Endothelial cell of umbilical vein (primary cell): ENCODE measurements at regions of chr10 and their contacts with region 1.

Region 1: DNA sequence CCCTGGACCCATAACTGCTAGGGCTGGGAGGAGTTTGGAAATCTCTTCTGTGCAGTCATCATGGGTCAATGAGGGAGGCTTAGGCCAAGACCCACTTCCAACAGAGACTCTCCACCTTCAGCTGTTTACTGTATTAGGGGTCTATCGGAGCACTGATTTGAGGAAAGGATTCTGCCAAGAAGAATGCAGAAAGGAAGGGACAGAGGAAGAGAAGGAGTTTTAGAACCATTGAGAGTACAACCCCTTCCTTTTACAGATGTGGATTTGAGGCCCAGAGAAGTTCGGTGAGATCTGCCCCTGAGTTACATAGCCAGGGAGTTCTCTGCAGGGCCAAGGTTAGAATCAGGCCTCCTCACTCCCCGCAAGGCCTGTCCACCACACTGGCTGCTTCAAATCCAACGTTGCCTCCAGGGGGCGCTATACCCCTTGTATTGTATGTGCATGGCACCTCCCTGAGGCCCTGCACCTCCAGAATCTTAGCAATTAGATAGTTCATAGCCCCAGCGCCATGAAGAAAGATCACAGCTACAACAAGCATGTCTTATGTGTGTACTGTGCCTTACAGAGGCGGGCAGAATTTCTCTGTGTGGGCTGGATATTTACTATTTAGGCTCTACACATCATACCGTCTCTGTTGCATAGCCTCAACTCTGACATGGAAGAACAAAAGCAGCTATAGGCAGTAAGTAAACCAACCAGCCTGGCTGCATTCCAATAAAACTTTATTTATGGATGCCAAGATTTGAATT is 246.8 kb downstream of the SKIDA1 start:
- DNase-seq: peak; percentile 90
- H3K4me3 ChIP-seq: no peak overlapping the region
- H3K27ac ChIP-seq: no peak overlapping the region
- H3K4me1 ChIP-seq: peaks cover 2% of the 10 kb centered on the region
- H3K27me3 ChIP-seq: no peaks in the 10 kb centered on the region
- CTCF ChIP-seq: peak; percentile 73 to 77
- POLR2A ChIP-seq: no peak

Region 2: DNA sequence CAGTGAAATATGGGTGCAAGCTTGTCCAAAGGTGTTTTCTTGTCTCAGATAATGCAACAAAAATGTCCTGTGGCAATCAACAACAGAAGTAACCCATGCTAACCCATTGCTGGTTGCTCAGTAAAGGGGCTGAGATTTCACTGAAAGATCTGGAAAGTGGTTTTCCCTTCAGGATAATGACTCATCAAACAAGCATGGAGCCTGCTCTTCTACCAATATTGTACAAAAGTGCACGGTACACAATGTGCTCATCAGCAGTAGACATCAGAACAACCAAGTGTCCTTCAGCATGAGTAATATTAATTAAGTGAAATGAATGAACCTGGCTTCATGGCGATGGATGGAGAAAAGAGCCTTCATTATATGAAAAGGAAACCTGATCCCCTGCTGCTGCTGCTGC is 94.4 kb before region 1 on chr10:
- CTCF ChIA-PET with region 1: no interaction called
- POLR2A ChIA-PET with region 1: no interaction called
- dilution Hi-C with region 1: no loop called
- intact Hi-C with region 1: no loop called
- DNase-seq: peak; percentile 34
- H3K4me3 ChIP-seq: no peak overlapping the region
- H3K27ac ChIP-seq: no peak overlapping the region
- H3K4me1 ChIP-seq: peaks cover 8% of the 10 kb centered on the region
- H3K27me3 ChIP-seq: no peaks in the 10 kb centered on the region
- CTCF ChIP-seq: no peak
- POLR2A ChIP-seq: no peak

Region 3: DNA sequence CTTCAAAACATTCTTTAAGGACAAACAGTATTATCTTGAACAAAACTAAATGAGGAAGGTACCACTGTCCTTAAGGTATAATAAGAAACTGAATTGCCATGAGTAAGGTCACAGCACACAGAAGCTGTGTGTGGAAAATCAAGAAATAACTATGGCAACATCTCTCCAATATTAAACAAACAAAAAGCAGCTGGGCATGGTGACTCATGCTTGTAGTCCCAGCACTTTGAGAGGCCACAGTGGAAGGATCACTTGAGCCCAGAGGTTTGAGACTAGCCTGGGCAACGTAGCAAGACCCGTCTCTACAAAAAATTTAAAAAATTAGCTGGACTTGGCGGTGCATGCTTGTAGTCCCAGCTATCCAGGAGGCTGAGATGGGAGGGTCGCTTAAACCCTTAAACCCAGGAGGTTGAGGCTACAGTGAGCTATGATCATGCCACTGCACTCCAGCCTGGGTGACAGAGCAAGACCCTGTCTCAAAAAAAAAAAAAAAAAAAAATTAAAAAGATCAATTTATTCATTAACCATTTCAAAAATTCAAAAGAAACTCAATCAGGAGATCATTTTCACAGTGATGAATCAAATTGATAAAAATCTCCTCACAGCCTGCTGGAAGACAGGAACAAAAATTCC is 51.4 kb after region 1 on chr10:
- CTCF ChIA-PET with region 1: interaction called, 10 read pairs
- POLR2A ChIA-PET with region 1: interaction called, 6 read pairs
- dilution Hi-C with region 1: no loop called
- intact Hi-C with region 1: loop called (anchors 1 kb)
- DNase-seq: peak; percentile 95
- H3K4me3 ChIP-seq: peak overlapping the region in 1 of 3 experiments; percentile 40
- H3K27ac ChIP-seq: peak overlapping the region; percentile 97
- H3K4me1 ChIP-seq: peaks cover 21% of the 10 kb centered on the region
- H3K27me3 ChIP-seq: no peaks in the 10 kb centered on the region
- CTCF ChIP-seq: no peak
- POLR2A ChIP-seq: no peak

Region 4: GRCh38 chr10:21355561-21356011 is 76.9 kb after region 1 on chr10:
- CTCF ChIA-PET with region 1: interaction called, 12 read pairs
- POLR2A ChIA-PET with region 1: no interaction called
- dilution Hi-C with region 1: no loop called
- intact Hi-C with region 1: no loop called
- DNase-seq: no peak
- H3K4me3 ChIP-seq: no peak overlapping the region
- H3K27ac ChIP-seq: no peak overlapping the region
- H3K4me1 ChIP-seq: no peaks in the 10 kb centered on the region
- H3K27me3 ChIP-seq: no peaks in the 10 kb centered on the region
- CTCF ChIP-seq: no peak
- POLR2A ChIP-seq: no peak

Region 5: GRCh38 chr10:21372651-21373410 is 94.2 kb after region 1 on chr10:
- CTCF ChIA-PET with region 1: interaction called, 18 read pairs
- POLR2A ChIA-PET with region 1: no interaction called
- dilution Hi-C with region 1: no loop called
- intact Hi-C with region 1: loop called (anchors 2 kb)
- DNase-seq: peak; percentile 88
- H3K4me3 ChIP-seq: peak overlapping the region in 1 of 3 experiments; percentile 15
- H3K27ac ChIP-seq: peak overlapping the region; percentile 14
- H3K4me1 ChIP-seq: peaks cover 26% of the 10 kb centered on the region
- H3K27me3 ChIP-seq: no peaks in the 10 kb centered on the region
- CTCF ChIP-seq: no peak
- POLR2A ChIP-seq: no peak

Region 6: DNA sequence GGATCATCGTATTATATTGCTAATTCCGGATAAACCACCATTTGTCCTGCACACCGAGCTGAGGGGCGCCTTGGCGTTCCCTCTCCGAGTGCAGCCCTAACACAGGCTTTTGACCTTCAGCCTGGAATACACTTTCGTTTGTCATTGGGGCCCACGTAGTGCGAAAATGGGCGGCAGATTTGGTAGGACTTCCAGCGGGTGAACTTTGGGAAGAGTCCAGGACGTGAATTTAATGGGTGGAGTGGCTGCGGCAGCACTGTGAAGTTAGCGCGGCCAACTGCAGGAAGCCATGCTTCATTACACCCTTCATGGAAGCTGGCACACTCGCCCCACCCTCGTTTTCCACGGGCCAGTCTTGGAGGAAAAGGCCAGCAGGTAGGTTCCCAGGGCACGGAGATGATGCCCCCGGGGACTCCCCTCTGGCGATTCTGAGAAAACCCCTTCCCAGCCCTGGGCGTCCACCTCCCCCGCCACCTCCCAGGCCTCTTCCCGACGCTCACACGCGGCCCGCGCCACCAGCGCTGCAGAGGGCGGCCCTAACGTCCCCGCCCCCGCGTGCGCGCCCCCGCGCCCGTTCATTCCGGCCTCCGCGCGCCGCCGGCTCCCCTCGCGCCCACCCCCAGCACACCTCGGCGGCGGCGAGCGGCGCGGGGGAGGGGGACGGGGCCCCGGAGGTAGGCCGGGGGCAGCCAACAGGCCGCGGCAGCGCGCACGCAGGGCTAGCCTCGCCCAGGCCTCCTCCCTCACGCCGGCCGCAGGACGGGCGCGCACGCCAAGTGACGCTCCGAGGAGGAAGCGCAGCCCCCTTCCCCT is 255.0 kb after region 1 on chr10 and contains the start of gene MLLT10:
- CTCF ChIA-PET with region 1: interaction called, 6 read pairs
- POLR2A ChIA-PET with region 1: no interaction called
- dilution Hi-C with region 1: no loop called
- intact Hi-C with region 1: loop called (anchors 1 kb)
- DNase-seq: peak; percentile 97
- H3K4me3 ChIP-seq: peak within 1 kb of the TSS; percentile 80 to 93 (median 83)
- H3K27ac ChIP-seq: peak within 1 kb of the TSS; percentile 60
- H3K4me1 ChIP-seq: peaks cover 17% of the 10 kb centered on the region
- H3K27me3 ChIP-seq: no peaks in the 10 kb centered on the region
- CTCF ChIP-seq: no peak
- POLR2A ChIP-seq: peak; percentile 83
- total RNA-seq, gene MLLT10: 54.0 and 54.6 TPM in 2 replicates

Region 7: GRCh38 chr10:21732067-21732772 is 453.6 kb after region 1 on chr10:
- CTCF ChIA-PET with region 1: interaction called, 14 read pairs
- POLR2A ChIA-PET with region 1: no interaction called
- dilution Hi-C with region 1: no loop called
- intact Hi-C with region 1: loop called (anchors 1 kb)
- DNase-seq: peak; percentile 78
- H3K4me3 ChIP-seq: no peak overlapping the region
- H3K27ac ChIP-seq: no peak overlapping the region
- H3K4me1 ChIP-seq: peaks cover 20% of the 10 kb centered on the region
- H3K27me3 ChIP-seq: no peaks in the 10 kb centered on the region
- CTCF ChIP-seq: peak; percentile 93 to 95
- POLR2A ChIP-seq: no peak